CD4-positive, alpha-beta memory T cell (primary cell): ENCODE measurements at regions of chr17 and their contacts with region 1.

Region 1: GRCh38 chr17:64129764-64130558 is at the start of gene ERN1:
- DNase-seq: peak; percentile 90 to 92 (median 90)
- H3K4me3 ChIP-seq: peak within 1 kb of the TSS; percentile 76 to 86
- H3K4me3 Mint-ChIP-seq: peak within 1 kb of the TSS; percentile 95 to 99 (median 98)
- H3K27ac ChIP-seq: peak within 1 kb of the TSS; percentile 86
- H3K27ac Mint-ChIP-seq: peak within 1 kb of the TSS; percentile 96 to 99 (median 98)
- H3K4me1 ChIP-seq: peaks cover 56% of the 10 kb centered on the region
- H3K4me1 Mint-ChIP-seq: peaks cover 33 to 61% (median 45%) of the 10 kb centered on the region in 4 donors
- H3K27me3 ChIP-seq: no peaks in the 10 kb centered on the region
- H3K27me3 Mint-ChIP-seq: no peaks in the 10 kb centered on the region
- total RNA-seq, gene ERN1: 163 to 172 TPM

Region 2: DNA sequence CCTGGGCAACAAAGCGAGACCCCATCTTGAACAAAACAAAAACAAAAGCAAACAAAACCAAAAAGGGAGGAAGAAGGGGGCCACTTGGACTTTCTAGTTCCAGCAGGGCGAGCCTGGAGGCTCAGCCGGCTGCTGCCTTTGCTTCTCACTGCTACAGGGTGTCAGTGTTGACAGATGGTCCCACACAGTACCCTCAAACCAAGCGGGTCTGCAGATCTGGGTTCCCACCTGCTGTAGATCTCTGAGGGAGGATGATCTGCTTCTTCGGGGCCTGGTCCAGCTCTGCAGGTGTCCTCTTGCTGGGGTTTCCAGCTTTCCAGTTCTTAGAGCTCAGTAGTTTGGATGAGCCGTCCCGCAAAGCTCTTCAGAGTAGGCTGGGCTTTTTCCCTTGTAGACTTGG is 225.6 kb before region 1 on chr17:
- CTCF ChIA-PET with region 1: interaction called, 40 read pairs
- POLR2A ChIA-PET with region 1: no interaction called
- intact Hi-C with region 1: no loop called
- DNase-seq: no peak
- H3K4me3 ChIP-seq: no peak overlapping the region
- H3K4me3 Mint-ChIP-seq: no peak overlapping the region
- H3K27ac ChIP-seq: no peak overlapping the region
- H3K27ac Mint-ChIP-seq: peak overlapping the region in 1 of 7 donors; percentile 47
- H3K4me1 ChIP-seq: no peaks in the 10 kb centered on the region
- H3K4me1 Mint-ChIP-seq: peaks cover 3 to 8% (median 4%) of the 10 kb centered on the region in 4 donors
- H3K27me3 ChIP-seq: no peaks in the 10 kb centered on the region
- H3K27me3 Mint-ChIP-seq: peaks cover 2 to 3% of the 10 kb centered on the region in 2 donors

Region 3: GRCh38 chr17:63931099-63931561 is 198.8 kb before region 1 on chr17:
- CTCF ChIA-PET with region 1: interaction called, 14 read pairs
- POLR2A ChIA-PET with region 1: interaction called, 11 read pairs
- intact Hi-C with region 1: no loop called
- DNase-seq: peak; percentile 43 to 66 (median 49)
- H3K4me3 ChIP-seq: peak overlapping the region; percentile 48 to 51
- H3K4me3 Mint-ChIP-seq: peak overlapping the region; percentile 92 to 98 (median 94)
- H3K27ac ChIP-seq: peak overlapping the region; percentile 71
- H3K27ac Mint-ChIP-seq: peak overlapping the region; percentile 48 to 96 (median 94)
- H3K4me1 ChIP-seq: peaks cover 25% of the 10 kb centered on the region
- H3K4me1 Mint-ChIP-seq: peaks cover 7 to 32% (median 22%) of the 10 kb centered on the region in 4 donors
- H3K27me3 ChIP-seq: no peaks in the 10 kb centered on the region
- H3K27me3 Mint-ChIP-seq: no peaks in the 10 kb centered on the region

Region 4: GRCh38 chr17:64020056-64020766 is 109.8 kb before region 1 on chr17 and contains the start of gene ICAM2:
- CTCF ChIA-PET with region 1: interaction called, 798 read pairs
- POLR2A ChIA-PET with region 1: interaction called, 226 read pairs
- intact Hi-C with region 1: no loop called
- DNase-seq: peak; percentile 94 to 99 (median 97)
- H3K4me3 ChIP-seq: peak within 1 kb of the TSS; percentile 93 to 96
- H3K4me3 Mint-ChIP-seq: peak within 1 kb of the TSS; percentile 97 to 100 (median 99)
- H3K27ac ChIP-seq: peak within 1 kb of the TSS; percentile 93
- H3K27ac Mint-ChIP-seq: peak within 1 kb of the TSS; percentile 99 to 100 (median 100)
- H3K4me1 ChIP-seq: peaks cover 71% of the 10 kb centered on the region
- H3K4me1 Mint-ChIP-seq: peaks cover 51 to 85% (median 63%) of the 10 kb centered on the region in 4 donors
- H3K27me3 ChIP-seq: no peaks in the 10 kb centered on the region
- H3K27me3 Mint-ChIP-seq: peaks cover 0 to 1% of the 10 kb centered on the region in 2 donors
- total RNA-seq, gene ICAM2: 150 to 158 TPM

Region 5: GRCh38 chr17:64051153-64051552 is 78.8 kb before region 1 on chr17:
- CTCF ChIA-PET with region 1: interaction called, 47 read pairs
- POLR2A ChIA-PET with region 1: interaction called, 60 read pairs
- intact Hi-C with region 1: loop called (anchors 1 kb)
- DNase-seq: peak; percentile 50 to 84 (median 73)
- H3K4me3 ChIP-seq: no peak overlapping the region
- H3K4me3 Mint-ChIP-seq: peak overlapping the region in 7 of 8 donors; percentile 37 to 78 (median 68)
- H3K27ac ChIP-seq: peak overlapping the region; percentile 52
- H3K27ac Mint-ChIP-seq: peak overlapping the region; percentile 69 to 96 (median 91)
- H3K4me1 ChIP-seq: peaks cover 56% of the 10 kb centered on the region
- H3K4me1 Mint-ChIP-seq: peaks cover 35 to 76% (median 54%) of the 10 kb centered on the region in 4 donors
- H3K27me3 ChIP-seq: no peaks in the 10 kb centered on the region
- H3K27me3 Mint-ChIP-seq: no peaks in the 10 kb centered on the region

Region 6: GRCh38 chr17:64081802-64082799 is 47.9 kb before region 1 on chr17:
- CTCF ChIA-PET with region 1: interaction called, 31 read pairs
- POLR2A ChIA-PET with region 1: interaction called, 121 read pairs
- intact Hi-C with region 1: loop called (anchors 1 kb)
- DNase-seq: peak; percentile 63 to 83 (median 75)
- H3K4me3 ChIP-seq: peak overlapping the region; percentile 4 to 21
- H3K4me3 Mint-ChIP-seq: peak overlapping the region in 5 of 8 donors; percentile 54 to 86 (median 80)
- H3K27ac ChIP-seq: peak overlapping the region; percentile 31
- H3K27ac Mint-ChIP-seq: peak overlapping the region in 1 of 7 donors; percentile 71
- H3K4me1 ChIP-seq: peaks cover 78% of the 10 kb centered on the region
- H3K4me1 Mint-ChIP-seq: peaks cover 18 to 34% (median 31%) of the 10 kb centered on the region in 4 donors
- H3K27me3 ChIP-seq: no peaks in the 10 kb centered on the region
- H3K27me3 Mint-ChIP-seq: no peaks in the 10 kb centered on the region

Region 7: GRCh38 chr17:64262417-64263260 is 132.7 kb after region 1 on chr17 and contains the start of gene TEX2:
- CTCF ChIA-PET with region 1: no interaction called
- POLR2A ChIA-PET with region 1: interaction called, 16 read pairs
- intact Hi-C with region 1: loop called (anchors 5 kb)
- DNase-seq: peak; percentile 70 to 86 (median 73)
- H3K4me3 ChIP-seq: peak within 1 kb of the TSS; percentile 76 to 79
- H3K4me3 Mint-ChIP-seq: peak within 1 kb of the TSS; percentile 91 to 98 (median 95)
- H3K27ac ChIP-seq: peak within 1 kb of the TSS; percentile 74
- H3K27ac Mint-ChIP-seq: peak within 1 kb of the TSS; percentile 93 to 98 (median 96)
- H3K4me1 ChIP-seq: peaks cover 33% of the 10 kb centered on the region
- H3K4me1 Mint-ChIP-seq: peaks cover 21 to 46% (median 34%) of the 10 kb centered on the region in 4 donors
- H3K27me3 ChIP-seq: no peaks in the 10 kb centered on the region
- H3K27me3 Mint-ChIP-seq: peaks cover 0 to 9% of the 10 kb centered on the region in 2 donors
- total RNA-seq, gene TEX2: 12.6 to 13.1 TPM